WTC11 (cell line): ENCODE measurements at regions of chr7 and their contacts with region 1.

Region 1: GRCh38 chr7:49099587-49100326 is 175.4 kb downstream of the CDC14C start:
- DNase-seq: no peak
- ATAC-seq: peak; percentile 76
- H3K4me3 Mint-ChIP-seq: no peak overlapping the region
- H3K27ac Mint-ChIP-seq: peak overlapping the region; percentile 99
- H3K4me1 Mint-ChIP-seq: peaks cover 46% of the 10 kb centered on the region
- H3K27me3 Mint-ChIP-seq: no peaks in the 10 kb centered on the region
- CTCF ChIP-seq: no peak

Region 2: DNA sequence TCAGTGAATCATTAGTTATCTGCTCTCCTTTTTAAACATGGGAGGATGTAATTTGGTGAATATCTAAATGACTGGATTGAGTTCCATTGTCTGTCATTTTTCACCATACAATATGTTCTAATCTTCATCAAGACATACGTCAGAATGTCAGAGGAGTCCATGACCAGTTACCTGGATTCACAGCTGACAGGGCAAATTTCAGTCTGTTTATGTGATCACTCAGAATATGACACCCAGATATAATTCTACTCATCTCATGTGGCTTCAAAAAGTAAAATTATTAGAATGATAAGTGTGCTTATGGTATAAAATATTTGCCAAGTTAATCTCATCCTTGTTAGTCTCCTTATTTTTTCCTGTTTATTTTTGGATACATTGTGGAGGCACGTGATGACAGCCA is 25.2 kb before region 1 on chr7:
- CTCF ChIA-PET with region 1: no interaction called
- POLR2A ChIA-PET with region 1: no interaction called
- DNase-seq: no peak
- ATAC-seq: no peak
- H3K4me3 Mint-ChIP-seq: no peak overlapping the region
- H3K27ac Mint-ChIP-seq: no peak overlapping the region
- H3K4me1 Mint-ChIP-seq: no peaks in the 10 kb centered on the region
- H3K27me3 Mint-ChIP-seq: peaks cover 3% of the 10 kb centered on the region; the same call in 1 of the 2 replicates
- CTCF ChIP-seq: no peak

Region 3: DNA sequence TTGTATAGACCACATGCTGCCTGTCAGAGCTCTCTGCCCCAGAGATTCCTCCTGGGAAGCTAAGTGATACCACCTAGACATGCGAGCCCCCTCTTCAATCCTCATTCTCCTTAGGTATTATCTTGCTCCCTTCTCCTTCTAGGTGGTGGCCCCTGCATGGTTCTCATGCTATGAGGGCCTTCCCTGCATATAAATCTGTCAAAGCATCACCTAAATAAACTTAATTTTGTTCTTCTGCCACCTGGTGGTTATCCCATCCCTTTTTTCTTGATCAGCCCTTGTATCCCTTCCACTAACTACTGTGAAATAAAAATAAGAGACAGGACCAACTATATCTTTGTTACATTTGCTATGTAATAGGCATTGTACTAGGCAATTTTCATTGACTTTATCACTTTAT is 66.7 kb after region 1 on chr7:
- CTCF ChIA-PET with region 1: interaction called, 10 read pairs
- POLR2A ChIA-PET with region 1: no interaction called
- DNase-seq: no peak
- ATAC-seq: peak; percentile 75
- H3K4me3 Mint-ChIP-seq: no peak overlapping the region
- H3K27ac Mint-ChIP-seq: no peak overlapping the region
- H3K4me1 Mint-ChIP-seq: peaks cover 7% of the 10 kb centered on the region
- H3K27me3 Mint-ChIP-seq: no peaks in the 10 kb centered on the region
- CTCF ChIP-seq: peak; percentile 23; the same call in 1 of the 2 replicates